Right lobe of liver (tissue), 6 donors: ENCODE measurements at regions of chr13 and their contacts with region 1.

Region 1: GRCh38 chr13:29508130-29508875 is 87.2 kb downstream of the SLC7A1 start:
- DNase-seq: peak; percentile 81 to 86 (median 83)
- ATAC-seq: peak; percentile 90 to 97 (median 92)
- H3K4me3 ChIP-seq: no peak overlapping the region
- H3K27ac ChIP-seq: no peak overlapping the region
- H3K4me1 ChIP-seq: no peaks in the 10 kb centered on the region
- H3K27me3 ChIP-seq: no peaks in the 10 kb centered on the region
- CTCF ChIP-seq: peak; percentile 90 to 99 (median 98)
- POLR2A ChIP-seq: no peak

Region 2: GRCh38 chr13:29713839-29714238 is 205.5 kb after region 1 on chr13:
- intact Hi-C with region 1: loop called in 1 of 2 experiments (anchors 10 kb)
- DNase-seq: no peak
- ATAC-seq: no peak
- H3K4me3 ChIP-seq: no peak overlapping the region
- H3K27ac ChIP-seq: no peak overlapping the region
- H3K4me1 ChIP-seq: no peaks in the 10 kb centered on the region
- H3K27me3 ChIP-seq: no peaks in the 10 kb centered on the region
- CTCF ChIP-seq: peak; percentile 27 to 51 (median 36)
- POLR2A ChIP-seq: no peak